Sciatic nerve (tissue), 2 donors: ENCODE measurements at regions of chr11 and their contacts with region 1.

Region 1: GRCh38 chr11:67685641-67686495 is 11.4 kb upstream of the ALDH3B2 start:
- DNase-seq: no peak
- ATAC-seq: no peak

Region 2: DNA sequence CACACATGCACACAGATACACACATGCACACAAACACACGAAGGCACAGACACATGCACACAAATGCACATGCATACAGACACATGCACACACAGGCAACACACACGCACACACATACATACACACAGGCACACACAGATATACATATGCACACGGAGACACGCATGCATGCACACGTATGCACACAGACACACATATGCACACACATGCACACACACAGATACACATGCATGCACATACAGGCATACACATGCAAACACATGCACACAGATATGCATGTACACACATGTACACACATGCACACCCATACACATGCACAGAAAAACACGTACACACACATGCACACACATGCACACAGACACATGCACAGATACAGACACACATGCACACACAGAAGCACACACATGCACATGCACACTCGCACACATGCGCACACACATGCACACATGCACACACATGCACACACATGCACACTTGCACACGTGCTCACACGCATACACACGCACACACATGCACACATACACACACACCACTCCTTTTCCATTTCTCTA is 59.4 kb after region 1 on chr11:
- intact Hi-C with region 1: no loop called
- DNase-seq: no peak
- ATAC-seq: no peak

Region 3: GRCh38 chr11:69233744-69234136 is 1547.9 kb after region 1 on chr11:
- intact Hi-C with region 1: loop called (anchors 5 kb)
- DNase-seq: peak; percentile 43
- ATAC-seq: no peak